ENCODE measurements at regions of chr12 and their contacts with region 1.

Region 1: DNA sequence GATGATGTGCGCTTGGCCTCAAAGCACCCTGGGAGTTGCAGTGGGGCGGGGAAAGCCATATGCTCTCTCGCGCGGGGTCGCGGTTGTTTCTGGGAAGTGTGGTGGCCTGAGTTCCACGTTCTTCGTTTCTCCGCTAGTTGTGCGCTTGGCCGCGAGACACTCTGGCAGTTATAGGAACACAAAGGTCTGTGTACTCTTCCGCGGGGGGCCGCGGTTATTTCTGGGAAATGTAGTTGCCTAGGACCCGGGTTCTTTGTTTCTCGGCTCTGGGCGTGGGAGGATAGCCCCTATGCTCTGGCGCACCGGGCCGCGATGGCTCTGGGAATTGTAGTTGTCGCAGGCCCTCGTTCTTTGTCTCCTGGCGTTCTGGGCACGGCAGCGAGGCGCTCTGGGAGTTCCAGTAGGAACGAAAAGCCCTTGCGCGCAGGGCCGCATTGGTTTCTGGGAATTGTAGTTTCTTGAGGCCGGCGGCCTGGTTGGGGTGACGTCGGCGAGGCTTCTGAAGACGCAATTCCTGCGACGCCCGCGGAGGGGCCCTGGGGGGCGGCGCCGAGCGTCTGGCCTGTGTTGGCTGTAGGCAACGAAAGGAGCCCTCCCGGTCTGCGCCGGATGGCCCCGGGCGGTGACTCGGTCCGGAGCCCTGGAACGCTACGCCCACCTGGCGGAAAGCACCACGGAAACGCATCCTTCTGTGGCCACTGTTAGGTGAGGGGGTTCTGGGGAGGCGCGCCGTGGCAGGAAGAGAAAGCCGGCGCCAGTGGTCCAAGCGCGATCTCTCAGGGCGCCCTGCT is at the start of gene ZNF140:
- DNase-seq: peak; percentile 95
- H3K4me3 Mint-ChIP-seq: no peak within 1 kb of the TSS
- H3K27ac Mint-ChIP-seq: no peak within 1 kb of the TSS
- H3K4me1 Mint-ChIP-seq: peaks cover 13% of the 10 kb centered on the region
- H3K27me3 Mint-ChIP-seq: no peaks in the 10 kb centered on the region
- total RNA-seq, gene ZNF140: 13.3 to 13.9 TPM

Region 2: GRCh38 chr12:132828706-132829534 is 251.6 kb before region 1 on chr12 and contains the start of gene GOLGA3:
- CTCF ChIA-PET with region 1: no interaction called
- intact Hi-C with region 1: loop called (anchors 2 kb)
- DNase-seq: peak; percentile 95
- H3K4me3 Mint-ChIP-seq: peak within 1 kb of the TSS; percentile 98
- H3K27ac Mint-ChIP-seq: peak within 1 kb of the TSS; percentile 100
- H3K4me1 Mint-ChIP-seq: peaks cover 49% of the 10 kb centered on the region
- H3K27me3 Mint-ChIP-seq: no peaks in the 10 kb centered on the region
- total RNA-seq, gene GOLGA3: 25.2 to 29.1 TPM

Region 3: GRCh38 chr12:132956011-132956788 is 124.4 kb before region 1 on chr12 and contains the start of gene ZNF605:
- CTCF ChIA-PET with region 1: no interaction called
- intact Hi-C with region 1: loop called (anchors 1 kb)
- DNase-seq: peak; percentile 92
- H3K4me3 Mint-ChIP-seq: peak within 1 kb of the TSS; percentile 89
- H3K27ac Mint-ChIP-seq: peak within 1 kb of the TSS; percentile 87
- H3K4me1 Mint-ChIP-seq: peaks cover 20% of the 10 kb centered on the region
- H3K27me3 Mint-ChIP-seq: no peaks in the 10 kb centered on the region
- total RNA-seq, gene ZNF605: 4.3 to 5.3 TPM

Region 4: DNA sequence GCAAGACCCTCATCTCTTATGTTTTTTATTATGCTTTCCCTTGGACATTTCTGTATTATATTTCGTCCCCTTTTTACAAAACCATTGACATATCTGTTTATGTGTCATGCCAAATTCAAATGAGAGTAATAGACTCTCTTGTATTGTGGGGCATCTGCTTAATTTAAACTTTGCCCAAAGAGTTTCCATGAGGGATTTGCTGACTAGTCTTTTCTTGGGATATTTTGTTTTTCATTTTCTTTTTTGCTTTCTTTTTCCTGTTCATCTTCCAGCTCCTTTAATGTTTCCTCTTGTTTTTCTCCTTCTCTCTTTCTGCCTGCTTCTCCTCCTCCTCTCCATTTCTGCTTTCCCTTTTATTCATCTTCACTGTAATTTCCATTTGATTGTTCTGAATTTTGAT is 108.2 kb before region 1 on chr12:
- CTCF ChIA-PET with region 1: no interaction called
- intact Hi-C with region 1: no loop called
- DNase-seq: no peak
- H3K4me3 Mint-ChIP-seq: no peak overlapping the region
- H3K27ac Mint-ChIP-seq: no peak overlapping the region
- H3K4me1 Mint-ChIP-seq: no peaks in the 10 kb centered on the region
- H3K27me3 Mint-ChIP-seq: no peaks in the 10 kb centered on the region

Region 5: GRCh38 chr12:133037207-133038005 is 43.2 kb before region 1 on chr12 and contains the start of gene ZNF84:
- CTCF ChIA-PET with region 1: no interaction called
- intact Hi-C with region 1: loop called (anchors 1 kb)
- DNase-seq: peak; percentile 97
- H3K4me3 Mint-ChIP-seq: peak within 1 kb of the TSS; percentile 97
- H3K27ac Mint-ChIP-seq: peak within 1 kb of the TSS; percentile 97
- H3K4me1 Mint-ChIP-seq: peaks cover 10% of the 10 kb centered on the region
- H3K27me3 Mint-ChIP-seq: no peaks in the 10 kb centered on the region
- total RNA-seq, gene ZNF84: 11.0 to 12.9 TPM

Region 6: DNA sequence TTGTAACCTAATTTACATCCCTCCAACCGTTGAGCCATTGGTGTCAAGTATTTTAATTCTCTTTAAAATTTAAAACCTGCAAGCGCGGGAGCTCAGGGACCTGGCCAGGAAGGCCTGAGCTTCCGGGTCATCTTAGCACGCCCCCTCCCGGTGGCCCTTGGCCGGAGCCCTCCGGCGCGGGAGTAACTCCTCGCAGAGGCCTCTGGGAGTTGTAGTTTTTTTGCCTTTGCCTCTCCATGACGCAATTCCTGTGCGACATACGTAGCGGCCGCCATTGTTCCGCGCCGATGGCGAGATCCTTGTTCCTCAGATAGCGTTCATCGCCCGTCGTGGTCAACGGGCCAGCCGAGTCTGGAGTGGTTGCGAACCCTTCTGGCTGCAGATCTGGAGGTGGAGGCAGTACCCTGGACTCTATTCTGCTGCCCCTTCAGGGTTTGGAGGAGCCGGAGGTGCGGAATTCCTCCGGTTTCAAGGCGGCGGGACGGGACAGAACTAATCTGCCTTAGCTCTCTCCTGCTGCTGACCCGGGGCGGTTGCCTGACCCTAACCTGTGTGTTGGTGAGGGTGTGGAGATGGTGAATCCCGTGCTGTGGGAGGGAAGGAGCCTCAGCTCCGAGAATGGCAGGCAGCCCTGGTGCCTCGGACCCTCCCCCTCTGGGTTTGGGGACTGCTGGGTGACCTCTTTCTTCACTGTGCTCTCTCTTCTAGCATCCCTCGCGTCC is 100.8 kb after region 1 on chr12 and contains the start of gene ZNF268:
- CTCF ChIA-PET with region 1: interaction called, 3 read pairs
- intact Hi-C with region 1: loop called (anchors 1 kb)
- DNase-seq: peak; percentile 96
- H3K4me3 Mint-ChIP-seq: peak within 1 kb of the TSS; percentile 94
- H3K27ac Mint-ChIP-seq: peak within 1 kb of the TSS; percentile 79
- H3K4me1 Mint-ChIP-seq: peaks cover 19% of the 10 kb centered on the region
- H3K27me3 Mint-ChIP-seq: no peaks in the 10 kb centered on the region
- total RNA-seq, gene ZNF268: 8.4 to 9.1 TPM